Endothelial cell of umbilical vein (primary cell): ENCODE measurements at regions of chr22 and their contacts with region 1.

Region 1: GRCh38 chr22:24803011-24803542 is 2.9 kb upstream of the SGSM1 start:
- DNase-seq: peak; percentile 38
- H3K4me3 ChIP-seq: no peak overlapping the region
- H3K27ac ChIP-seq: no peak overlapping the region
- H3K4me1 ChIP-seq: peaks cover 2% of the 10 kb centered on the region
- H3K27me3 ChIP-seq: peaks cover 0 to 2% of the 10 kb centered on the region in 2 experiments
- CTCF ChIP-seq: peak; percentile 80 to 91
- POLR2A ChIP-seq: no peak

Region 2: DNA sequence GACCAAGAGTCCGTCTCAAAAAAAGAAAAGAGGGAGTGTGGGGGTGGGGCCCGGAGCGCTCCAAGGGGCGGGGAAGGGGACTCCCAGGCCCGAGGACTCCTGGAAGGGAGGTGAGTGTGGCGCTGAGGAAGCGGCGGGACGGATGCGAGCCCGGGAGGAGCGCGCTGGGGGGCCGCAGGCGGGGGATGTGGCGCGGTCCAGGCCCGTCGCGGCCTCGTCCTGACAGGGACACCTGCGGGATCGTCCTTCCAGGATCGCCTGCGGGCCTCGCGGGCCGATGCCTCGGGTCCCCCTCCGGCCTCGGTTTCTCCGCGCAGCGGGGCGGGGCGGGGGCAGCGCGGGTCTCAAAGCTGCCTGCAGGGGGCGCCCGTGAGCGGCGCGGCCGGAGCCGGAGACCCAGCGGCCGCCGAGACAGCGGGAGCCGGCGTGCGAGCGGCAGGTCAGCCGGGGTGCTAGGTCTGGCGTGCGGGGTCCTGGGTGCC is 379.5 kb before region 1 on chr22:
- CTCF ChIA-PET with region 1: no interaction called
- POLR2A ChIA-PET with region 1: no interaction called
- dilution Hi-C with region 1: no loop called
- intact Hi-C with region 1: no loop called
- DNase-seq: peak; percentile 44
- H3K4me3 ChIP-seq: peak overlapping the region in 2 of 3 experiments; percentile 34 to 82
- H3K27ac ChIP-seq: no peak overlapping the region
- H3K4me1 ChIP-seq: peaks cover 27% of the 10 kb centered on the region
- H3K27me3 ChIP-seq: no peaks in the 10 kb centered on the region
- CTCF ChIP-seq: peak; percentile 73 to 85
- POLR2A ChIP-seq: no peak

Region 3: DNA sequence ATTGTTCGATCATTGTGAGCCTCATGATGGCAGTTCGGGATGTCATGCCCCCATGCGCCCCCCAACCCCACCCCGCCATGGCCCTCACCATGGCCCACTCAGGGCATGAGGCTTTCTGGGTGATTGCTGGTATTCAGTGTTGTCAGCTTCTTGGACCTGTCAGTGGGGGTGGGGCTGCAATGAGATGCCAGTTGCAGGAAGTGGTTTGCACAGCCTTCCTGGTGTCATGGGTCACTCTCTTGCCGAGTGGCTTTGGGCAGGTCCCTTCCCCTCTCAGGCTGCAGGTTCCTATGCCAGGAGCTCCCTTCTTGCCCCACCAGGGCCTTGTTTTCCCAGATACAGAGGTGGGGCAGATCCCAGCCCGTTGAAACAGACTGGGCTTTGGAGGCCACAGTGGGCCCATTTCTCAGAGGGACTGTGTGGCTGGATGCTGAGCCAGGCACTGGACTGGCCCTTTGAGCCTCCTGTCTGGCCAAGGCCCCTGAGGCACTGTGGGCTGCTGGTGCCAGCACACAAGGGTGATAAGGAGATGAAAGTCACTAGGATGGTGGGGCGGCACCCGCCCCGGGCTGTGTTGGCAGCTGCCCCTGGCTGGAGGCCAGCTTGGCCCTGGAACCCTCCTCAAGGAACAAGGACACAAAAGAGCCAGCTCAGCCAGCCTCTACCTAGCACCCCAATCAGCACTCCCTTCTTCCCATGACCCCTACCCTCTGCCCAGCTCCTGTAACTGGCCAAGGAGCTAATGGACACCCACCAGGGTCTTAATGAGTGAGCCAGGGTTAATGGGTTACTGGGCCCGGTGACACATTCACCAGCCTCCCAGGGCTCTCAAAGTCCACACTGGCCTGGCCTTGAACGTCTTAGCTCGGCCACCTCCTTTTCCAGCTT is 201.6 kb before region 1 on chr22:
- CTCF ChIA-PET with region 1: no interaction called
- POLR2A ChIA-PET with region 1: no interaction called
- dilution Hi-C with region 1: no loop called
- intact Hi-C with region 1: no loop called
- DNase-seq: no peak
- H3K4me3 ChIP-seq: no peak overlapping the region
- H3K27ac ChIP-seq: no peak overlapping the region
- H3K4me1 ChIP-seq: peaks cover 7% of the 10 kb centered on the region
- H3K27me3 ChIP-seq: no peaks in the 10 kb centered on the region
- CTCF ChIP-seq: no peak
- POLR2A ChIP-seq: no peak

Region 4: DNA sequence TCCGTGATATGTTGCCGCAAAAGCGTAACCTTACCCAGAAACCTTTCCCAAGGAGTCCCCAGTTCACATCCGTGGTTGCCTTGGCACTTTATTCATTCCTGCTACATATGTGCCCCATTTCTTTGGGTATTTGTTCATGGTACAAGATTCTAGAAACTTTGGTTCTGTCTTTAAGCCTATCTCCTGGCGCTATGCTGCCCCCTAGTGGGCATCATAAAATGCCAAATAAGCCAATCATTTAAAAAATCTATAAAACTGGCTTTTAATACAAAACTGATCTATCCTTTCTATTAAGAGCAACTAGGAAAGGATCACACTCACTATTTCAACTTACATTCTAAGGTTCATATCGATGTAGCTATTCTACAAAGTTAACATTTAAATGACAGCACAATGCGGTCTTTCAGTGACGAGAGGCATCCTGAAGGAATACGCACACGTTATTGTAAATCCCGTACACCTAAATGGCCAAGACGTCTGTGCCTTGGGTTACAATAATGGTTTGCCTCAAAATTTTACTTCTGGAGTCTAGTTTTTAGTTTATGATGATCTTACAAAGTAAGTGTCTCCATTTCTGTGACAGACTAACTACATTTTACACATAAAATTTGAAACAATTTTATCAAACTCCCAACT is 44.8 kb before region 1 on chr22:
- CTCF ChIA-PET with region 1: interaction called, 12 read pairs
- POLR2A ChIA-PET with region 1: no interaction called
- dilution Hi-C with region 1: no loop called
- intact Hi-C with region 1: no loop called
- DNase-seq: peak; percentile 70
- H3K4me3 ChIP-seq: no peak overlapping the region
- H3K27ac ChIP-seq: no peak overlapping the region
- H3K4me1 ChIP-seq: peaks cover 25% of the 10 kb centered on the region
- H3K27me3 ChIP-seq: peaks cover 2 to 7% of the 10 kb centered on the region in 2 experiments
- CTCF ChIP-seq: peak; percentile 60 to 70
- POLR2A ChIP-seq: no peak

Region 5: DNA sequence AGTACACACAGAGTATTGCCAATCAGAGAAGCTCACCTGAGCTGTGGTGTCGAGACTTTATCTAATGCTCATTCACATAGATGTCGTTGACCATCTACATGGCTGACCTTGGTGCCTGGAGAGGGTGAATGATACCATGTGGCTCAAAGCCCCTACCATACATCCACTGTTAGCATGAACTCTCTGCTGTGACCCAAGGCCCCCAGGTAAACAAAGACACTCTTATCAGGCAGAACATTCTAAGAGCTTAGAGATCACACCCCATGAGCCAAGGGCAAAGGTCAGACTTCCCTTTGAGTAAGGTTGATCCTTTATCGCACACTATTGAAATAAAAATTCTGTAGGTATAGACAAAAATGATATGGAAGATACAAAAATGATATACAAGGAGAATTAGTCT is 13.6 kb before region 1 on chr22:
- CTCF ChIA-PET with region 1: interaction called, 66 read pairs
- POLR2A ChIA-PET with region 1: no interaction called
- dilution Hi-C with region 1: no loop called
- intact Hi-C with region 1: no loop called
- DNase-seq: no peak
- H3K4me3 ChIP-seq: no peak overlapping the region
- H3K27ac ChIP-seq: no peak overlapping the region
- H3K4me1 ChIP-seq: no peaks in the 10 kb centered on the region
- H3K27me3 ChIP-seq: peaks cover 0 to 1% of the 10 kb centered on the region in 2 experiments
- CTCF ChIP-seq: no peak
- POLR2A ChIP-seq: no peak

Region 6: GRCh38 chr22:24819911-24820461 is 16.9 kb after region 1 on chr22:
- CTCF ChIA-PET with region 1: interaction called, 11 read pairs
- POLR2A ChIA-PET with region 1: no interaction called
- dilution Hi-C with region 1: no loop called
- intact Hi-C with region 1: no loop called
- DNase-seq: no peak
- H3K4me3 ChIP-seq: no peak overlapping the region
- H3K27ac ChIP-seq: no peak overlapping the region
- H3K4me1 ChIP-seq: no peaks in the 10 kb centered on the region
- H3K27me3 ChIP-seq: no peaks in the 10 kb centered on the region
- CTCF ChIP-seq: no peak
- POLR2A ChIP-seq: no peak

Region 7: DNA sequence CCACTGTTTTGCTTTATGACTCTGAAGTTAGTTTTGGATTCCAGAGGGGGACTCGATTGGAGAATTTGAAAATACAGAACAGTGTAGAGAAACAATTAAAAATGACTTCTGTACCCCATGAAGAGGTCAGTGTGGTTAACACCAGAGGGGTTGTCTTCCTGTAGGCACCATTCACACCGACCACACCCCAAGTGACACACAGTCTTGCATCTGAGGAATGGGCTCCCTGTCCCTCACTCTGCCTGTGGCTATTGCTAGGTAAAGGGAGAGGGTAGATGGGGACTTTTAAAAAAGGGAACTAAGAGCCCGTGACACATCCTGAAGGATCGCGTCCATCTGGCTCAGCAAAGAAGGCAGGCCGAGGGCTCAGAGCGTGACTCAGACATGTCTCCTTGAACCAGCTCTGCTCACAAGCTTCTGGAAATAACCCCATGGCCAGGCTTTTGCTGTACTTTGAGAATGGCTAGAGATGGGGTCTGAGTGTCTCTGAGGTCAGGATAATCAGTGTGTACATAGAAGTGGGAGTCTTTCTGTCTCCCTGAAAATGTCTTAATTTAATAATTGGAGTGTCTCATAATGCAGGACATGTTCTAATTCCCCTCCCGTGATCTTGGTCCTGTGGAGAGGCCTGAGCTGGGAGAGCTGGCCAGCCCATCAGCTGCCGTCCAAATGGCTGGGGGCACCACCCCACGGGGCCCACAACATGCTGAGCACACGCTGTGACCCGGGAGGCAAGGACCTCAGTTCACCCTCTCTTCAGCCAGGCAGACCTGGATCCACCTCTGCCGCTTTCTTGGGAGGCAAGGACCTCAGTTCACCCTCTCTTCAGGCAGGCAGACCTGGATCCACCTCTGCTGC is 42.2 kb after region 1 on chr22:
- CTCF ChIA-PET with region 1: interaction called, 29 read pairs
- POLR2A ChIA-PET with region 1: no interaction called
- dilution Hi-C with region 1: no loop called
- intact Hi-C with region 1: no loop called
- DNase-seq: no peak
- H3K4me3 ChIP-seq: no peak overlapping the region
- H3K27ac ChIP-seq: no peak overlapping the region
- H3K4me1 ChIP-seq: no peaks in the 10 kb centered on the region
- H3K27me3 ChIP-seq: no peaks in the 10 kb centered on the region
- CTCF ChIP-seq: no peak
- POLR2A ChIP-seq: no peak